Activated CD8-positive, alpha-beta T cell treated with anti-CD3 and anti-CD28 coated beads for 36 hours (primary cell): ENCODE measurements at regions of chr15 and their contacts with region 1.

Region 1: GRCh38 chr15:33086507-33087121 is 107.9 kb downstream of the FMN1 start:
- DNase-seq: no peak
- ATAC-seq: no peak
- H3K4me3 Mint-ChIP-seq: no peak overlapping the region
- H3K27ac Mint-ChIP-seq: no peak overlapping the region
- H3K4me1 Mint-ChIP-seq: no peaks in the 10 kb centered on the region
- H3K27me3 Mint-ChIP-seq: peaks cover 2% of the 10 kb centered on the region
- CTCF ChIP-seq: peak; percentile 48

Region 2: DNA sequence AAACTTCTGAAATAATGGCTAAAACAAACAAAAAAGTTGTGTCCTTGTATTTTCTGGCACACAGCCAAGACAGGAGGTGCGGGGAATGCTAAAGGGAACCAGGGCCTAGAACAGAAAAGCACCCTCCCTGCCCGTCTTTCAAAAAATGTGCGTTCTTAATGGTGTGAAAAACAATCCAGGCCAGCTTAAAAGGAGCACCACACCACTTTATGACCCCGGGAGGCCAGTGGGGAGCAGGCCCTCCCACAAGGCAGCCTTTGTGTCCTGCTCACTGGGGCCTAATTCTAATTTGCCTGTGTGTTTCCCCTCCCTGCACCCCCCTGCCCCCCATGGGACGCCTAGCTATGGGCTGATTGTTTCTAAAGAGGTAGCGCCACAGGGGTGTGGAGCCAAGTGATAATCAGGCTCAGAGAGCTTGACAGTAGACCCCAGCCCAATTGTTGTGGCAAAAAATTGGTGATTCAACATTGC is 187.5 kb before region 1 on chr15:
- CTCF ChIA-PET with region 1: no interaction called
- POLR2A ChIA-PET with region 1: no interaction called
- intact Hi-C with region 1: no loop called
- DNase-seq: no peak
- ATAC-seq: no peak
- H3K4me3 Mint-ChIP-seq: no peak overlapping the region
- H3K27ac Mint-ChIP-seq: no peak overlapping the region
- H3K4me1 Mint-ChIP-seq: no peaks in the 10 kb centered on the region
- H3K27me3 Mint-ChIP-seq: peaks cover 4% of the 10 kb centered on the region
- CTCF ChIP-seq: no peak

Region 3: GRCh38 chr15:33104212-33104611 is 17.6 kb after region 1 on chr15:
- CTCF ChIA-PET with region 1: interaction called, 13 read pairs
- POLR2A ChIA-PET with region 1: interaction called, 3 read pairs
- intact Hi-C with region 1: no loop called
- DNase-seq: peak; percentile 50
- ATAC-seq: peak; percentile 64
- H3K4me3 Mint-ChIP-seq: no peak overlapping the region
- H3K27ac Mint-ChIP-seq: no peak overlapping the region
- H3K4me1 Mint-ChIP-seq: peaks cover 4% of the 10 kb centered on the region
- H3K27me3 Mint-ChIP-seq: peaks cover 1% of the 10 kb centered on the region
- CTCF ChIP-seq: no peak

Region 4: GRCh38 chr15:33132722-33133345 is 46.2 kb after region 1 on chr15:
- CTCF ChIA-PET with region 1: interaction called, 47 read pairs
- POLR2A ChIA-PET with region 1: no interaction called
- intact Hi-C with region 1: loop called (anchors 5 kb)
- DNase-seq: peak; percentile 7
- ATAC-seq: no peak
- H3K4me3 Mint-ChIP-seq: no peak overlapping the region
- H3K27ac Mint-ChIP-seq: no peak overlapping the region
- H3K4me1 Mint-ChIP-seq: no peaks in the 10 kb centered on the region
- H3K27me3 Mint-ChIP-seq: no peaks in the 10 kb centered on the region
- CTCF ChIP-seq: peak; percentile 55

Region 5: DNA sequence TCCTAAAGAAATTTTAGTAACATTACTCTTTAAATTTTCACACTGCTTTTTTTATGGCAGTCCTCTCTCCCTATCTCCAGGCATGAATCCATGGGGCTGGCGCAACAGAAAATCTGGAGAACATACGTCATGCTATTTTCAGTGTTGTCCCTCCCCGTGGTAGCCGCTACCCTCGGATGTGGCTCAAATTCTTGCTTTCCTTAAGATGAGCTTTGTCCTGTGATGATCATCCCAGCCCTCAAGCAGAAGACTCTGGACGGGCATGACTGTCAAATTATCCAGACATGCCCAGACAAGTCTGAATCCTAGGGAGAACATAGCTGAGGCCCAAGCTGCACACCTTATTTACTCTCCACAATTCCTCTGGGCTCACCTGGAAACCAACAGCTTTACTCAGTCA is 58.8 kb after region 1 on chr15:
- CTCF ChIA-PET with region 1: no interaction called
- POLR2A ChIA-PET with region 1: no interaction called
- intact Hi-C with region 1: no loop called
- DNase-seq: no peak
- ATAC-seq: no peak
- H3K4me3 Mint-ChIP-seq: no peak overlapping the region
- H3K27ac Mint-ChIP-seq: no peak overlapping the region
- H3K4me1 Mint-ChIP-seq: peaks cover 8% of the 10 kb centered on the region
- H3K27me3 Mint-ChIP-seq: no peaks in the 10 kb centered on the region
- CTCF ChIP-seq: no peak

Region 6: DNA sequence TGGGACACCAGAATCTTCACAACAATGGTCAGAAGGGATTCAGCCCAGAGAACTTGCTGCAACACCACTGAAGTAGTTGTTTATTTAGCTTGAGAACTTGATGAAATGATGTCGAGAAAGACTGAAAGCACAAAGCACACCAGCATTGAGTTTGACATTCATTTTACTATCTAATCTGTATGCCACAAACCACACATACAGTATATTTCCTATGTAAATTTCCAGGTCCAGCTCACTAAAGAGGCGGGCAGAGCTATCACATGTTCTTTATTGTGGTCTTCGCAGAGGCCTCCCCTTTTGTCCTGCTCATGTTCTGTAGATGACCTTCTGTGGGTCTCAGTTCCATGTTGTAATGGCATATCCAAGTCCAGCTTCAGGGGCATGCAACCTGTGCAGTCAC is 118.3 kb after region 1 on chr15:
- CTCF ChIA-PET with region 1: no interaction called
- POLR2A ChIA-PET with region 1: no interaction called
- intact Hi-C with region 1: no loop called
- DNase-seq: no peak
- ATAC-seq: no peak
- H3K4me3 Mint-ChIP-seq: no peak overlapping the region
- H3K27ac Mint-ChIP-seq: no peak overlapping the region
- H3K4me1 Mint-ChIP-seq: peaks cover 27% of the 10 kb centered on the region
- H3K27me3 Mint-ChIP-seq: peaks cover 6% of the 10 kb centered on the region
- CTCF ChIP-seq: no peak

Region 7: GRCh38 chr15:33226559-33227181 is 140.1 kb after region 1 on chr15:
- CTCF ChIA-PET with region 1: interaction called, 3 read pairs
- POLR2A ChIA-PET with region 1: no interaction called
- intact Hi-C with region 1: loop called (anchors 10 kb)
- DNase-seq: peak; percentile 44
- ATAC-seq: peak; percentile 92
- H3K4me3 Mint-ChIP-seq: no peak overlapping the region
- H3K27ac Mint-ChIP-seq: no peak overlapping the region
- H3K4me1 Mint-ChIP-seq: peaks cover 2% of the 10 kb centered on the region
- H3K27me3 Mint-ChIP-seq: no peaks in the 10 kb centered on the region
- CTCF ChIP-seq: peak; percentile 40

Region 8: GRCh38 chr15:33292717-33293307 is 206.2 kb after region 1 on chr15:
- CTCF ChIA-PET with region 1: interaction called, 10 read pairs
- POLR2A ChIA-PET with region 1: no interaction called
- intact Hi-C with region 1: no loop called
- DNase-seq: peak; percentile 73
- ATAC-seq: peak; percentile 49
- H3K4me3 Mint-ChIP-seq: no peak overlapping the region
- H3K27ac Mint-ChIP-seq: no peak overlapping the region
- H3K4me1 Mint-ChIP-seq: no peaks in the 10 kb centered on the region
- H3K27me3 Mint-ChIP-seq: peaks cover 7% of the 10 kb centered on the region
- CTCF ChIP-seq: peak; percentile 68